ENCODE measurements at regions of chr10 and their contacts with region 1.

Region 1: GRCh38 chr10:58943256-58943890 is 233.1 kb upstream of the PHYHIPL start:
- DNase-seq: no peak
- H3K4me3 ChIP-seq: no peak overlapping the region
- H3K27ac ChIP-seq: no peak overlapping the region
- H3K4me1 ChIP-seq: no peaks in the 10 kb centered on the region
- H3K27me3 ChIP-seq: no peaks in the 10 kb centered on the region
- CTCF ChIP-seq: no peak
- EP300 ChIP-seq: no peak
- POLR2A ChIP-seq: no peak

Region 2: DNA sequence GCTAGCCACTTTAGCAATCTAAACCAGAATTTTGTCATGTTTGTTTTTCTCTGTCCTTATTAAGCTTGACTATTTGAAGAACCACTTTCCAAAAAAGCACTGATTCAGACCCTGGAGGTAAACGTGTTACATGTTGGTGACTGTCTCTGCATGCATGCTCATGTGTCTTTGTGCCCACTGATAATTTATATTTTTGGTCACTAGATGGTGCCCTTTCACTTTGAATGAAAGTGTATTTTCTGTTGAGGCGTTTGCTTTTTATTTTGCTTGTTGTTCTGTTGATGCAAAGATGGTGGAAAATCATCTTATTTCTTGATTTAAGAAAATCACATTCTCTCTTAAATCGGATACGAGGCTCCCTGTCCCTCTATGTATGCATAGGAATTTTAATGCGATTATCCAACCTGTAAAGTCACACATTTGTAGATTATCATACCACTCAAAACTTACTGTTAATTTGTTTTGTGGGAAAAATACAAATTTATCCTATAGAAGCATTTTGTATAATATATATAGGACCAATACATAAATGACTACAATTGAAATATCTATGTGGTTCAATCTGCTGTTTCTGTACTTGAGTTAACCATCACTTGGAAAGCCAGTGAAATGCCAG is 161.4 kb before region 1 on chr10:
- intact Hi-C with region 1: loop called in 1 of 4 experiments (anchors 10 kb)
- DNase-seq: no peak
- H3K4me3 ChIP-seq: no peak overlapping the region
- H3K27ac ChIP-seq: no peak overlapping the region
- H3K4me1 ChIP-seq: peaks cover 8% of the 10 kb centered on the region
- H3K27me3 ChIP-seq: no peaks in the 10 kb centered on the region
- CTCF ChIP-seq: peak; percentile 25 to 66 (median 61)
- EP300 ChIP-seq: no peak
- POLR2A ChIP-seq: no peak

Measured in ovary (tissue), 10 donors.